Spleen (tissue), 13 donors: ENCODE measurements at regions of chr11 and their contacts with region 1.

Region 1: GRCh38 chr11:1202776-1203504 is 19.9 kb upstream of the MUC5B start:
- DNase-seq: peak; percentile 91
- H3K4me3 ChIP-seq: no peak overlapping the region
- H3K27ac ChIP-seq: no peak overlapping the region
- H3K4me1 ChIP-seq: peaks cover 0 to 10% (median 8%) of the 10 kb centered on the region in 6 donors
- H3K27me3 ChIP-seq: peaks cover 0 to 58% (median 19%) of the 10 kb centered on the region in 7 donors
- CTCF ChIP-seq: peak; percentile 82 to 98 (median 95)
- POLR2A ChIP-seq: no peak

Region 2: GRCh38 chr11:748007-748359 is 455.0 kb before region 1 on chr11:
- intact Hi-C with region 1: no loop called
- DNase-seq: peak; percentile 86
- H3K4me3 ChIP-seq: peak overlapping the region; percentile 85 to 98 (median 96)
- H3K27ac ChIP-seq: peak overlapping the region; percentile 58 to 99 (median 91)
- H3K4me1 ChIP-seq: peaks cover 21 to 76% (median 46%) of the 10 kb centered on the region in 6 donors
- H3K27me3 ChIP-seq: no peaks in the 10 kb centered on the region
- CTCF ChIP-seq: no peak
- POLR2A ChIP-seq: no peak

Region 3: DNA sequence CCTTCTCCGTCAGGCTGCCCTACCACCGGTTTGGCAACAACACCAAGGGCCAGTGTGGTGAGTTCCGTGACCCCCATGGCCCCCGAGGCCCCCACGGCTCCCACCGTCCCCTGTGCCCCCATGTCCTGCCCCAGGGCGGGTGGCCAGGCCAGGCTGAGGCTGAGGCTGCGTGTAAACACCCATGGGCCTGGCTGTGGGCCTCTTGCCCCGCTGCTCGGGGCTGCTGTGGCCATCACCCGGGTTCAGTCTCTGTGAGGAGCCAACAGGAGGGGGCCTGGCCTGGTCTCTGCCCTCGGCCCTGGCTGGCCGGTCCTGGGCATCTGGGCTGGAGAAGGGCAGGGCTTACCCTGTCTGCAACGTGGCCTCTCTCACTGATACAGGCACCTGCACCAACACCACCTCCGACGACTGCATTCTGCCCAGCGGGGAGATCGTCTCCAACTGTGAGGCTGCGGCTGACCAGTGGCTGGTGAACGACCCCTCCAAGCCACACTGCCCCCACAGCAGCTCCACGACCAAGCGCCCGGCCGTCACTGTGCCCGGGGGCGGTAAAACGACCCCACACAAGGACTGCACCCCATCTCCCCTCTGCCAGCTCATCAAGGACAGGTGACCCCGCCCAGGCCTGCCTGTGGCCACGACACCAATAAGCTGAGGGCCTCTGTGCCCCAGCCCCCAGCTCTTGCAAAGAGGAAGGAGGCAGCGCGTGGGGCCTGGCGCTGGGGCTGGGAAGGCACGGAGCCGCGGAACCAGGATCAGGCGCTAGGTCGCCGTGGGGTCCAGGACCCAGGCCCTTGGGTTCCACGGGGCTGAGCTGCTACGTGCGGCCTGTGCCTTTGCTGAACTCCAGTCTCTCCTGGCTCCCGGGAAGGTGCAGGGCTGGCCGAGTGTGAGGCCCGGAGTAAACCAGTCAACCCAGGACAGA is 99.3 kb before region 1 on chr11:
- intact Hi-C with region 1: no loop called
- DNase-seq: peak; percentile 70
- H3K4me3 ChIP-seq: no peak overlapping the region
- H3K27ac ChIP-seq: no peak overlapping the region
- H3K4me1 ChIP-seq: no peaks in the 10 kb centered on the region
- H3K27me3 ChIP-seq: peaks cover 0 to 21% (median 0%) of the 10 kb centered on the region in 7 donors
- CTCF ChIP-seq: no peak
- POLR2A ChIP-seq: no peak

Region 4: GRCh38 chr11:1515082-1516060 is 312.4 kb after region 1 on chr11:
- intact Hi-C with region 1: loop called (anchors 5 kb)
- DNase-seq: peak; percentile 93
- H3K4me3 ChIP-seq: peak overlapping the region in 1 of 8 donors; percentile 11
- H3K27ac ChIP-seq: no peak overlapping the region
- H3K4me1 ChIP-seq: peaks cover 18 to 94% (median 56%) of the 10 kb centered on the region in 6 donors
- H3K27me3 ChIP-seq: no peaks in the 10 kb centered on the region
- CTCF ChIP-seq: peak; percentile 73 to 98 (median 90)
- POLR2A ChIP-seq: no peak

Region 5: GRCh38 chr11:1572197-1573076 is 369.5 kb after region 1 on chr11 and contains the start of gene DUSP8:
- intact Hi-C with region 1: loop called (anchors 10 kb)
- DNase-seq: peak; percentile 91
- H3K4me3 ChIP-seq: peak within 1 kb of the TSS; percentile 38 to 79 (median 45)
- H3K27ac ChIP-seq: peak within 1 kb of the TSS; percentile 29 to 91 (median 78)
- H3K4me1 ChIP-seq: peaks cover 13 to 65% (median 39%) of the 10 kb centered on the region in 6 donors
- H3K27me3 ChIP-seq: peaks cover 0 to 88% (median 34%) of the 10 kb centered on the region in 7 donors
- CTCF ChIP-seq: no peak
- POLR2A ChIP-seq: no peak
- total RNA-seq, gene DUSP8: 1.4 to 18.4 (median 3.1) TPM